ENCODE measurements at regions of chr3 and their contacts with region 1.

Region 1: DNA sequence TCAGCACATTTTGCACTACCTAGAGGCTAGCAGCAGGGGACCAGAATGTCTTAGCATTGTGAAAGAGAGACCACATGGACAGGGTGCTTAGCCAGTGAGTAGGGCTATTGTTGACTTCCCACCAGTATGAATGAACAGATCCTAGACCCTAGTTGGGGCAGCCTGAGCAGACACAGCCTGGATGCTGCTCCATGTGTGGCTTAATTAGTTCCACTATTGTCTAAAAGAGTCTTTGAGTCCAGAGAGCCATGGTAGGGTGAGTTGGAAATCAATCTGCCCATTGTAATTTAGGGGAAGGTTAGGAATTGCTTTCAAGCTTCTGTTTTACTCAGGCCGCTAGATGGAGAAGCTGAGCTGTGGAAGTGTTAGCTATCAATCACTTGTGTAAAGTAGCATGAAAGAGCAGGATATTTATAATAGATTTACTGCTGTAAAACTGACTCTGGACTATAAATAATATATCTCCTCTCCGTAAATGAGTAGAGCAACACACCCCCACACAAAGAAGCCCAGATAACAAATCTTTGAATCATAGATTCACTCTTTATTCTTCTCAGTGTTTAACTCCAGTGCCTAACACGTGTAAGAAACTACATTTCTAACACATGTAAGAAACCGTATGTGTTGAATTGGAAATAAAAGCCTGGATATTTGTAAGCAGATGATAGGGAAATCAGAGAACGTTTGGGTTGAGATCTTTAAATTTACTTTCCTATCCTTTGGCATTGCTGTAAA is 4.1 kb upstream of the GCSAM start:
- DNase-seq: peak; percentile 87
- H3K4me3 ChIP-seq: peak overlapping the region; percentile 30
- H3K27ac ChIP-seq: peak overlapping the region; percentile 99
- H3K4me1 ChIP-seq: peaks cover 68% of the 10 kb centered on the region
- CTCF ChIP-seq: peak; percentile 93

Region 2: GRCh38 chr3:112056451-112056978 is 80.6 kb before region 1 on chr3:
- CTCF ChIA-PET with region 1: no interaction called
- POLR2A ChIA-PET with region 1: no interaction called
- intact Hi-C with region 1: no loop called
- DNase-seq: no peak
- H3K4me3 ChIP-seq: no peak overlapping the region
- H3K27ac ChIP-seq: no peak overlapping the region
- H3K4me1 ChIP-seq: no peaks in the 10 kb centered on the region
- CTCF ChIP-seq: no peak

Region 3: GRCh38 chr3:112293368-112294321 is 156.5 kb after region 1 on chr3 and contains the start of gene SLC9C1:
- CTCF ChIA-PET with region 1: interaction called, 3 read pairs
- POLR2A ChIA-PET with region 1: interaction called, 11 read pairs
- intact Hi-C with region 1: loop called (anchors 1 kb)
- DNase-seq: peak; percentile 86
- H3K4me3 ChIP-seq: peak within 1 kb of the TSS; percentile 13
- H3K27ac ChIP-seq: peak within 1 kb of the TSS; percentile 44
- H3K4me1 ChIP-seq: peaks cover 44% of the 10 kb centered on the region
- CTCF ChIP-seq: peak; percentile 87
- total RNA-seq, gene SLC9C1: not detected in 2 replicates

Region 4: DNA sequence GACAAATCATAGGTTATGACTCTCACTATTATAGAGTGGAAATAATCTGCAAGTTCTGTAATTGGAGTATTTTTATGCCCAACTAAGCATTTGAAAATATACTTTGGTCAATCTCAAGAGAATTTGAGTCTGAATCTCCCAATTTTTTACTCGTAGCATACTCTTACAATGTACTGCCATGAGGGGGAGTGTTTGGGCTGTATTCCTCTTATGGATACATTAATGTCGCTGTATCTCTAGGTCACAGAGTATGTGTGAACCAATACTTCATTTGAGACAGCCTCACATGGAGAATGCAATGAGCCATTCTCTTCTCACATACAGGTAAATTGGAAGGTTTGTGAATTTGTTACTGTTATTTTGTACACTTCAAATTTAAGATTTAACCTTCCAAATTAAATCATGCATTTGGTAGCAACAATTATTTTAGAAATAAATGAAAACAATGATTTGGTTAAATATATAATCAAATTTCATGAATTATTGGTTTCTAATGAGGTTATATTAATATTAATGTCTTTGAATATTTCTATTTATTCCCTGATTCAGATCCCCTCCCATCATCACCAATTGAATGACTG is 190.3 kb after region 1 on chr3:
- CTCF ChIA-PET with region 1: no interaction called
- POLR2A ChIA-PET with region 1: interaction called, 3 read pairs
- intact Hi-C with region 1: loop called (anchors 1 kb)
- DNase-seq: peak; percentile 83
- H3K4me3 ChIP-seq: no peak overlapping the region
- H3K27ac ChIP-seq: no peak overlapping the region
- H3K4me1 ChIP-seq: peaks cover 6% of the 10 kb centered on the region
- CTCF ChIP-seq: peak; percentile 93

Region 5: DNA sequence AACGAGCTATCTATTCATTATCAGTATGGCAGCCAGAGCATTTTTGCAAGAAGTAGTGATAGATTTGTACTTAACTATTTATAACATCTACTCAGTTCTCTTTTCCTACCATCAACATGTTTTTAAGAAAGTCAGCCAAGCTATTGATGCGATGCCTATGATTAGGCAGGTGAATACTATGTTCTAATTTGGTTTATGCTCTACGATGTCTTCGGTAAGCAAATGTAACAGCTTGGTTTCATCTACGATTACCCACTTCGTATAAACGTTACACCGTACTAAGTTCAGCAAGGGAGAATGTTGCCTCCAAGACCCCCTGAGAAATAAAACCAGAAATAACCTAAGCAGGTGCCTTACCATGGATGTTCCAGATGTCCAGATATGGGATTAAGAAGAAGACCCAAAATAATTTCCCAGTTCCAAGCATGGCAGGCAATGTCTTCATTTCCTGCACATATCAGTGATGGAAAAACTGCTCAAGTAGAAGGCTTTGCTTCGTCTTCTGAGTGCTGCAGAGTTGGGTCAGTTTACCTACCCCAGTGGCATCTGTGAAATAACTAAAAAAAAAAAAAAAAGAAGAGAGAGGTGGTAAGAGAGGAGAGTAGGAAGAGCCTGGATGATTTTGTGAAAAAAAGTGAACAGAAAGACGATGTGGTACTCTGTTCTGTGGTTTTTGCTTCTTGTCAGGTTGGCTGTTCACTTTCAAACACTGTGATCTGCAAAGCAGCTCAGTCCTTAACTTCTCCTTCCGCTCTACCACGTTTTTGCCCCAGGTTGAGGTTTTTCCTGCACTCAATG is 362.0 kb after region 1 on chr3 and contains the start of gene BTLA:
- CTCF ChIA-PET with region 1: no interaction called
- POLR2A ChIA-PET with region 1: interaction called, 12 read pairs
- intact Hi-C with region 1: loop called (anchors 2 kb)
- DNase-seq: peak; percentile 74
- H3K4me3 ChIP-seq: peak within 1 kb of the TSS; percentile 72
- H3K27ac ChIP-seq: peak within 1 kb of the TSS; percentile 85
- H3K4me1 ChIP-seq: peaks cover 55% of the 10 kb centered on the region
- CTCF ChIP-seq: no peak
- total RNA-seq, gene BTLA: 7.7 and 8.0 TPM in 2 replicates

Region 6: DNA sequence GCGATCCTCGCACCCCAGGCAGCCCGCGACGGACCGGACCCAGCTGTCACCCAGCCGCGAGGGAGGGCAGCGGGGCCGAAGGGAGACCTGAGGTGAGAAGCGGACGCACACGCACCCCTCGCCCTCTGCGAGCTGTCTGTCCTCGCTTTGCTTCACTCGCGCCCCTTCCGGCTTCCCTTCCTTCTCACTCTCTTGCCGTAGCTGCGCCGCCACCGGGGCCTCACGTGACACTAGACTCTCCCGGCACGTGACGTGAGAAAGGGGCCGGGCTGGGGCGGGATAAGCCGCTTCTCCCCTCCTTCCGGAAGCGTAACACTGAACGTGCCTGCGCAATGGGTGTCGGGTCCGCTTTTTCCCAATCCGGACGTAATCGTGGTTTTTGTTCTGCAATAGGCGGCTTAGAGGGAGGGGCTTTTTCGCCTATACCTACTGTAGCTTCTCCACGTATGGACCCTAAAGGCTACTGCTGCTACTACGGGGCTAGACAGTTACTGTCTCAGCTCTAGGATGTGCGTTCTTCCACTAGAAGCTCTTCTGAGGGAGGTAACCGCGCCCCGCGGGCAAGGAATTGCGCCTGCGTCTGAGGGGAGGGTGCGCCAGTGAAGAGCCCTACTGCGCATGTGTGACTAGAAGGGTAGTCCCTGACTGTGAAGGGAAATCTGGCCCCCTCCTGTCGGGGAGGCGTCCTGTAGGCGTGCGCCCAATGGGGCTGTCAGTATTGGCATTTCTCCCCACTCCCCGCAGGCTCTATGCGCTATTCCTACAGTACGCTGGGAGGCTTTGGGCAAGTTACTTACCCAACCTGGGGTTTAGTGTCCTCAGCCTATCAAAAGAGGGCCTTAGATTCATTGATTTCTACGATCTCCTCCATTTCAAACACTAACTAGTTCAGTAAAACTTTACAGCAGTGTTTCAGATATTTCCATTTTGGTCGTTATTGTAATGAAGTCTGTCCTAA is 424.9 kb after region 1 on chr3 and contains the starts of genes ATG3 and SLC35A5:
- CTCF ChIA-PET with region 1: interaction called, 3 read pairs
- POLR2A ChIA-PET with region 1: interaction called, 5 read pairs
- intact Hi-C with region 1: loop called (anchors 5 kb)
- DNase-seq: peak; percentile 99
- H3K4me3 ChIP-seq: peak within 1 kb of the TSS; percentile 95
- H3K27ac ChIP-seq: peak within 1 kb of the TSS; percentile 80
- H3K4me1 ChIP-seq: peaks cover 28% of the 10 kb centered on the region
- CTCF ChIP-seq: 0 out of 2 replicates have a peak, but pooled peaks have one; percentile 5
- total RNA-seq, gene ATG3: 84.6 and 109 TPM in 2 replicates
- total RNA-seq, gene SLC35A5: 10.3 and 12.4 TPM in 2 replicates

Region 7: DNA sequence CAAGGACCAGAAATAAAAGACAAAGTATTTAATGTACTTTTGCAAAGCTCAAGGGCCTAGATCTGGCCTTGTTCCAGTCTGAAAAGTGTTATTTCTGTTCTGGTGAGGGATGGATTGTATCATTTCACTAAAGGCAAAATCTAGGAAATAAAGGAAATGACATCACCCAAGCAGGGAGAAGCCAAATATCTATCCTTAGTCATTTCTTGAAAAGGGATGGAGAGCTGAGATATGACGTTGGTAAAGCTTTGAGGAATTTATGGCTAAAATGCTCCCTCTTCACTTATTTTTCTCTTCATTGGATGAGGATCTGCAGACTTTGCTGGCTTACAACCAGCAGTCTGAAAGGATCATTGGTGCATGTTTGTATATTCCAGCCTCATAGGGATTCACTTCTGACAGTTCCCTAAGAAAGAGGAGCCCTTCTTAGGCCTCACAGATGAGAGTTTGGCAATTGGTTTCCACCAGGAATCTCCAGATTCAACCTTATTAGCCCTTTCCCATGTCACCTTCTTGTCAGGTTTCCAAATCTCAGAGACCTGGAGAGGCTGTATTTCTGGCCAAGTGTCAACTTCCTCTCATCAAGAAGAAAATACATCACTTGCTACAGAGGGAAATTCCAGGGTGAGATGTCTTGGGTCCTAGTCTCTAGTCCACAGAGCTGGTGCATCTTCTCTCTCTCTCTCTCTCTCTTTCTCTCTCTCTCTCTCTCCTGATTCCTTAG is 980.5 kb after region 1 on chr3:
- CTCF ChIA-PET with region 1: no interaction called
- POLR2A ChIA-PET with region 1: no interaction called
- intact Hi-C with region 1: no loop called
- DNase-seq: no peak
- H3K4me3 ChIP-seq: no peak overlapping the region
- H3K27ac ChIP-seq: no peak overlapping the region
- H3K4me1 ChIP-seq: no peaks in the 10 kb centered on the region
- CTCF ChIP-seq: no peak

Measured in OCI-LY7 (cell line).